ENCODE measurements at regions of chr1 and their contacts with region 1.

Region 1: GRCh38 chr1:173476664-173477285 is 360 bp upstream of the PRDX6 start:
- DNase-seq: peak; percentile 64 to 93
- H3K4me3 ChIP-seq: peak overlapping the region; percentile 88 to 95
- H3K27ac ChIP-seq: peak overlapping the region; percentile 99
- H3K4me1 ChIP-seq: peaks cover 12 to 37% of the 10 kb centered on the region in 2 donors
- H3K27me3 ChIP-seq: no peaks in the 10 kb centered on the region
- CTCF ChIP-seq: peak in 1 of 3 experiments; percentile 5

Region 2: GRCh38 chr1:173429471-173430402 is 47.0 kb before region 1 on chr1:
- intact Hi-C with region 1: loop called (anchors 1 kb)
- DNase-seq: peak; percentile 49 to 95
- H3K4me3 ChIP-seq: peak overlapping the region; percentile 34 to 46
- H3K27ac ChIP-seq: peak overlapping the region; percentile 75 to 85
- H3K4me1 ChIP-seq: peaks cover 0 to 14% of the 10 kb centered on the region in 2 donors
- H3K27me3 ChIP-seq: no peaks in the 10 kb centered on the region
- CTCF ChIP-seq: peak; percentile 48 to 69 (median 48)

Region 3: GRCh38 chr1:173440430-173440829 is 36.3 kb before region 1 on chr1:
- intact Hi-C with region 1: no loop called
- DNase-seq: no peak
- H3K4me3 ChIP-seq: no peak overlapping the region
- H3K27ac ChIP-seq: no peak overlapping the region
- H3K4me1 ChIP-seq: no peaks in the 10 kb centered on the region
- H3K27me3 ChIP-seq: no peaks in the 10 kb centered on the region
- CTCF ChIP-seq: no peak

Region 4: DNA sequence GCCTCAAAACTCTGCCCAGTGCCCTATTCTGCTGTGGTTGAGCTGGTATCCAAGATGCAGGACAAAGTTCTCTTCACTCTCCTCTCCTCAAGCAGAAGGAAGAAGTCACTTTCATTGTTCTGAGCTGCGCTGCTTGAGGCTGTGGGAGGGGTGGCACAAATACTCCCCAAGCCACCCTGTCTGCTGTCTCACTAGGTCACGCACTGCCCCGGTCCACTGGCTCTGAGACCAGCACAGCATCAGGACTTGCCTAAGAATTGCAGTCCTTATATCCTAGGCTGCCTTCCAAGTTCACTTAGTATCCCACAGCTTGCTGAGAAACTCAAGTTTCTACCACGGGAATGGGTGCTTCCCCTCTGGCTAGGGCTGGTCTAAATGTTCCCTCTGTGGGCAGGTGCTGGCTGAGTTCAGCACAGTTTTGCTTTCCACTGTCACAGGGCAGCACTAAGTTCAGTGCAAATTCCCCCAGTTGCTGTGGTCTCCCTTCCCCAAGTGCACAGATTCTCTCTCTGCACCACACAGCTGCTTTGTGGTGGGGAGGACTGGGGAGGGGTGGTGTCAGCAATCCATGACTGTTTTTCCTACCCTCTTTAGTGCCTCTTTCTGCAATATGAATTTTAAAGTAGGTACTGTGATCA is 93.7 kb after region 1 on chr1:
- intact Hi-C with region 1: no loop called
- DNase-seq: no peak
- H3K4me3 ChIP-seq: no peak overlapping the region
- H3K27ac ChIP-seq: no peak overlapping the region
- H3K4me1 ChIP-seq: no peaks in the 10 kb centered on the region
- H3K27me3 ChIP-seq: no peaks in the 10 kb centered on the region
- CTCF ChIP-seq: no peak

Region 5: DNA sequence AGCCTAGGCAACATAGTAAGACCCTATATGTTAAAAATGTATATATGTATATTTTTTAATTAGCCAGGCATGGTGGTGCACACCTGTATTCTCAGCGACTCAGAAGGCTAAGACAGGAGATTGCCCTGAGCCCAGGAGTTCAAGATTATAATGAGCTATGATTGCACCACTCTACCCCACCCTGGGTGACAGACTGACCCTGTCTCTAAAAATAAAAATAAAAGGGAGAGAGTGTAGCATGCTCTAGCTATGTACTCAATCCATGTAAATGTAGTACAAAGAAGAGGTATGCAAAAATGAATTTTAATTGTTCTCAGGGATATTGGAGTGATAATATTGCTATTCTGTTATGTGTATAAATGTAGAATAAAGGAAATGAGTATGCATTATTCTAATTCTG is 294.8 kb after region 1 on chr1:
- intact Hi-C with region 1: loop called (anchors 5 kb)
- DNase-seq: no peak
- H3K4me3 ChIP-seq: no peak overlapping the region
- H3K27ac ChIP-seq: no peak overlapping the region
- H3K4me1 ChIP-seq: no peaks in the 10 kb centered on the region
- H3K27me3 ChIP-seq: no peaks in the 10 kb centered on the region
- CTCF ChIP-seq: no peak

Region 6: DNA sequence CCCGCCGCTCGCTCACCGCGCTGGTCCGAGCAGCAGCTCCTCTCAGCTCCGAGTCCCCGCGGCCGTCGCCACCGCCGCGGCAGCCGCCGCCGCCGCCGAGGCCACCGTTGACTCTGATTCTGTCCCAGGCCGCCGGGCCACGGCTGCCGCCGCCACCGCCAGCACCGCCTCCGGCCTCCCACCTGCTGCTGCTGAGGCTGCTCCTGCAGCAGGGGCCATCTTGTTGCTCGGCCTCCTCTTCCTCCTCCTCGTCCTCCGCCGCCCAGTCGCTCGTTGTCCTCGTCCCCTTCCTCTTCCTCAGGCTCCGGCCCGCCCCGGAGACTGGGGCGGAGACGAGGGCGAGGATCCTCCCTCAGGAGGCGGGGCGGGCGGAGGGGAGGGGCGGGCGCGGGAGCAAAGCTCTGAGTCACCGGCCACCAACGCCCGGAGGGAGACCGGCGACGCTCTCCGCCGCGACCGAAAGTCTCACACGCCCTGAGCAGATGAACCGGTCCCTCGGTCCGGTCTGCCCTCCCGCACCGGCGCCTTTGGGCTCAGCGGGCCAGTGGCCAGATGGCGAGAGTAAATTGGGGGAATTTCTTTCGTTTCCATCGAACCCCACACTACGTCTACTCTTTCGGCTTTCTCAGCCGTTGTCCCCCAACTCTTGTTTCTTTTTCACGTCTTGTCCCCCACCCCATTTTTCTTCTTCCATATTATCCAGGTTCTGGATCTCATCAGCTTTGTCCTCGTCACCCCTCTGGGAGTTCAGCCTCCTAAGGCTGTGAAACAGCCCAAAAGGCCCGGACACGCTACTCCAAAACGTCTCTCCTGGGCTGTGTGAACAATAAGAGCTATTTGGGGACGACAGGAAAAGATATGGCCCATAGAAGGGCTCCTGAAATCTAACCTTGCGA is 545.6 kb after region 1 on chr1 and contains the start of gene RC3H1:
- intact Hi-C with region 1: loop called (anchors 2 kb)
- DNase-seq: peak; percentile 63 to 92
- H3K4me3 ChIP-seq: peak within 1 kb of the TSS; percentile 88 to 100
- H3K27ac ChIP-seq: peak within 1 kb of the TSS; percentile 90 to 94
- H3K4me1 ChIP-seq: peaks cover 19 to 22% of the 10 kb centered on the region in 2 donors
- H3K27me3 ChIP-seq: no peaks in the 10 kb centered on the region
- CTCF ChIP-seq: no peak
- total RNA-seq, gene RC3H1: 5.1 TPM